ENCODE measurements at regions of chr5 and their contacts with region 1.

Region 1: DNA sequence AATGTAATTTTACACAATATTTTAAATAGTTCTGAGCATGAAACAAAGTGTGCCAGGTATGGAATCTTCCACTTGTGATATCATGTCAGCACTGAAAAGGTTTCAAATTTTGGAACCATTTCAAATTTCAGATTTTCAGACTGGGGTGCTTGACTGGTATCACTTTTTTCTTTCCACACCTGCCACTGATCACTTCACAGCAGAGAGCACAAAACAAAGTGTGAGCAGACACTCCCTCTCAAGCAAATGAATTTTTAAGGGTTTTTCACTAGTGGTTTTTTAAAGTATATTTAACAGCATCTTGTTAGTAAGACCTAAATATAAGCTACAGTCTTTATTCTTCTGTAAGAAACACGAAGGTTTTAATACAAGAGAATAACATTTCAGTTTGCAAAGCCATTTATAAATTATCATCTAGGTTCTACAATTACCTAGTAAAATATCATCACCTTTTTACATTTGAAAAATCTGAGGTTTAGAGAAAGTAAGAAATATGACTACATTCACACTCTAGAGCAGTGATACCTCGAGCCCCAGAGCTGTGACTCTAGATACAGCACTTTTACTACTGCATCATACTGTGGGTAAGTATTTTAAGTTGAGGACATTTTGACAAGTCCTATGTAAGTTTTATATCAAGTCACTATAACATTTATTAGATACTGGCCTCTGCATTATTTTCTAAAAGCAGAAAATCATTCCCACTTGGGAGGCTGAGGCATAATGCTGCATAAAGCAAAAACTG is 14.6 kb downstream of the GOLPH3 start:
- DNase-seq: no peak
- H3K4me3 Mint-ChIP-seq: no peak overlapping the region
- H3K27ac Mint-ChIP-seq: no peak overlapping the region
- H3K4me1 Mint-ChIP-seq: peaks cover 10% of the 10 kb centered on the region
- H3K27me3 Mint-ChIP-seq: no peaks in the 10 kb centered on the region

Region 2: DNA sequence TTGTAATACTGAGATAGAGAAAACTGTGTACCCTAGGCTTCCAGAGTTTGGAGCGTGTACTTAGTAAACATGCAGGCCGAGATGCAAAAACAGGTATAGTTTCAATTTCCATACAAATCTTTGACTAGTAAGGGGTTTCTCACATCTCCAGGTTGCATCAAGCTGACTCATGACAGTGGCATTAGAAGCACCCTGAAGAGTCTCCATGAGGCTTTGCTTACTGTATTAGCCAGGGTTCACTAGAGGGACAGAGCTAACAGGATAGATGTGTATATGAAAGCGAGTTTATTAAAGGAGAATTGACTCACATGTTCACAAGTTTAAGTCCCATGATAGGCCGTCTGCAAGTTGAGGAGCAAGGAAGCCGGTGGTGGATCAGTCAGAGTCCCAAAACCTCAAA is 1241.3 kb before region 1 on chr5:
- intact Hi-C with region 1: no loop called
- DNase-seq: no peak
- H3K4me3 Mint-ChIP-seq: no peak overlapping the region
- H3K27ac Mint-ChIP-seq: no peak overlapping the region
- H3K4me1 Mint-ChIP-seq: no peaks in the 10 kb centered on the region
- H3K27me3 Mint-ChIP-seq: no peaks in the 10 kb centered on the region

Region 3: GRCh38 chr5:31741496-31741895 is 418.0 kb before region 1 on chr5:
- intact Hi-C with region 1: no loop called
- DNase-seq: no peak
- H3K4me3 Mint-ChIP-seq: no peak overlapping the region
- H3K27ac Mint-ChIP-seq: no peak overlapping the region
- H3K4me1 Mint-ChIP-seq: no peaks in the 10 kb centered on the region
- H3K27me3 Mint-ChIP-seq: no peaks in the 10 kb centered on the region

Region 4: DNA sequence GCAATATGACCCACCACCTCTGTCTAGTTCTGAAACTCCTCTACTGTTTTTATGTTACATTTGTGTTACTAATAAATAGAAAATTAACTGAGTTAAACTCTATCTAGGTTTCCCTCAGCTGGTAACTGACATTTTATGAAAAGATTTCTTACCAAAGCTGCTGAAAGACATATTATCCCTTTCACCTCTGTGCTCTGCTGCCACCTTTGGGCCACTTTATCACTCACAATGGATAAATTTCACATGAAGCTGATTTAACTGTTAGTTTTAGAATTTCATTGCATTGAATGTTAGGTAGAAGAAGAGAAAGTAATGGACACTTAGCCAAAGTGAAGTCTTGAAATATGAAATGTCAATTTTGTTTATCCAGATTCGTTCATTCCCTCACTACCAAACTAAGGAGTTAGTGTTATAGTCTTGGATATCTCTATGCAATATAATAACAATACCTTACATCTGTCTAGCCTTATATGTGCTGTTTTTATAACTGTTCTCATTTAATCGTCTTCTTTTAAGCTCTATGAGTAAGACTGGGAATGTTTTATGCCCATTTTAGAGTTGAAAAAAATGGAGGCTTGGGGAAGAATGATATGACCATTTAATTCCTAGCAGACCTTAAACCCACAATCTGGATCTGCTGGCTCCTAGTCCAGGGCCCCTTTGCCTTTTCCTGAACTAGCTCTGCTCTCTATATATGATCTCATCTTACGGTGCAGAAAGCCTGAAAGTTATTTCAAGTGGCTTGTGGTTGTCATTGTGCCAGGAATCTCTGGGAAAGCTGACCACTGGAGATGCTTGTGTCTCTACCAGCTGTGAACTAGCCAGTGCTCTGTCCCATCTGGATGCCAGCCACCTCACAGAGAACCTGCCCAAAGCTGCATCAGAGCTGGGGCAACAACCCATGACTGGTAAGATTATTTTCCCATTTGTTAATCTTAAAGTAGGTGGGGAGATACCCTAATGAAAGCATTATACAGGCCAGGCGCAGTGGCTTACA is 82.5 kb before region 1 on chr5:
- intact Hi-C with region 1: no loop called
- DNase-seq: no peak
- H3K4me3 Mint-ChIP-seq: no peak overlapping the region
- H3K27ac Mint-ChIP-seq: no peak overlapping the region
- H3K4me1 Mint-ChIP-seq: no peaks in the 10 kb centered on the region
- H3K27me3 Mint-ChIP-seq: no peaks in the 10 kb centered on the region

Region 5: GRCh38 chr5:32138839-32139493 is 20.5 kb before region 1 on chr5:
- intact Hi-C with region 1: loop called (anchors 2 kb)
- DNase-seq: peak; percentile 28
- H3K4me3 Mint-ChIP-seq: peak overlapping the region; percentile 22
- H3K27ac Mint-ChIP-seq: peak overlapping the region; percentile 93
- H3K4me1 Mint-ChIP-seq: peaks cover 24% of the 10 kb centered on the region
- H3K27me3 Mint-ChIP-seq: no peaks in the 10 kb centered on the region

Region 6: DNA sequence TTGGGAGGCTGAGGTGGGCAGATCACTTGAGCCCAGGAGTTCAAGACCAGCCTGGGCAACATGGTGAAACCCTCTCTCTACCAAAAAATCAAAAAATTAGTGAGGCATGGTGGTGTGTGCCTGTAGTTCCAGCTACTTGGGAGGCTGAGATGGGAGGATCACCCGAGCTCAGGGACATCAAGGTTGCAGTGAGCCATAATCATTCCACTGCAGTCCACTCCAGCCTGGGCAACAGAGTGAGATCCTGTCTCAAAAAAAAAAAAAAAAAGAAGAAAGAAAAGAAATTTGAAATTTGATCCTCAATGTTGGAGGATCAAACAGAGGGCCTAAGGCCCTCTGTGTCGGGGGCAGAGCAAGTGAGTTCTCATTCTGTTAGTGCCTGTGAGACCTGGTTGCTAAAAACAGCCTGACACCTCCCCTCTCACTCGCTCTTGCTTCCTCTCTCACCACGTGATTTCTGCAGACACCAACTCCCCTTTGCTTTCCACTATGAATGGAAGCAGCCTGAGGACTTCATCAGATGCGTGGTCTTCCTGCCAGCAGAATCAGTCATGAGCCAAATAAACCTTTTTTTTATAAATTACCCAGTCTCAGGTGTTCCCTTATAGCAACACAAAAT is 23.1 kb after region 1 on chr5:
- intact Hi-C with region 1: no loop called
- DNase-seq: no peak
- H3K4me3 Mint-ChIP-seq: no peak overlapping the region
- H3K27ac Mint-ChIP-seq: no peak overlapping the region
- H3K4me1 Mint-ChIP-seq: peaks cover 6% of the 10 kb centered on the region
- H3K27me3 Mint-ChIP-seq: peaks cover 2% of the 10 kb centered on the region

Measured in activated T-helper 2 cell treated with anti-CD3 and anti-CD28 coated beads, Interferon-gamma antibody, Interleukin-2, Interleukin-4, amounts not matched to agents 10 μg/mL and 5 μg/mL and 100 μg/mL, durations not matched to agents 14 hours and 24 hours and 36 hours (primary cell).